GM12878 (cell line): ENCODE measurements at regions of chr9 and their contacts with region 1.

Region 1: GRCh38 chr9:72364679-72365524 is at the start of gene ZFAND5:
- DNase-seq: peak; percentile 57
- ATAC-seq: peak; percentile 88
- H3K4me3 ChIP-seq: peak within 1 kb of the TSS; percentile 91
- H3K27ac ChIP-seq: peak within 1 kb of the TSS; percentile 80
- H3K4me1 ChIP-seq: peaks cover 4% of the 10 kb centered on the region
- H3K27me3 ChIP-seq: no peaks in the 10 kb centered on the region
- CTCF ChIP-seq: peak in 1 of 3 experiments; percentile 27; a peak in 1 of 6 replicates
- EP300 ChIP-seq: peak in 1 of 2 experiments; percentile 44; a peak in 2 of 4 replicates
- POLR2A ChIP-seq: peak; percentile 97
- RAD21 ChIP-seq: peak; percentile 20; the same call in 1 of the 2 replicates
- polyA plus RNA-seq, gene ZFAND5: 22.5 to 32.3 TPM

Region 2: DNA sequence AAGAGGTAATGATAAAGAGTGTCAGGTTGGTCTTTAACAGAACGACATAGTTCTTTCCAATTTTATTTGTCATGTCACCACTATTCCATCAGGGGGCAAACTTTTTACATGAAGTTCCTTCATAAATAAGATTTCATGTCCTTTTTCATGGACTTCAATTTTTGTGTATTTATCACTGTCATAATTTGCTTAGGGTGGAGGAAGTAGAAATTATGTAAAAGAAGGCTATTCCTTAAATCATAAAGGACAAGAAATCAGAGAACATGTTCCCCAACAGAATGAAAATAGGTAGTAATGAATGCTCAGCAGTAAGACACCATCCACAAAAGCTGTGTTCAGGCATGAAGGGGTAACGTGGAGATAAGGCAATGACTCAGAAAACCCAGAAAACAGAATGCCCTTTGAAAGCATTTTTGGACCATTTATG is 72.6 kb before region 1 on chr9:
- CTCF ChIA-PET with region 1: interaction called, 17 read pairs
- POLR2A ChIA-PET with region 1: no interaction called
- RAD21 ChIA-PET with region 1: interaction called, 32 read pairs
- SMC1A ChIA-PET with region 1: interaction called, 9 read pairs
- in situ Hi-C with region 1: no loop called
- intact Hi-C with region 1: loop called (anchors 5 kb)
- DNase-seq: no peak
- ATAC-seq: peak; percentile 61
- H3K4me3 ChIP-seq: no peak overlapping the region
- H3K27ac ChIP-seq: no peak overlapping the region
- H3K4me1 ChIP-seq: no peaks in the 10 kb centered on the region
- H3K27me3 ChIP-seq: no peaks in the 10 kb centered on the region
- CTCF ChIP-seq: peak; percentile 27 to 63 (median 33); a peak in 4 of 6 replicates
- EP300 ChIP-seq: no peak
- POLR2A ChIP-seq: no peak
- RAD21 ChIP-seq: peak; percentile 65

Region 3: GRCh38 chr9:72454871-72455491 is 90.1 kb after region 1 on chr9:
- CTCF ChIA-PET with region 1: no interaction called
- POLR2A ChIA-PET with region 1: interaction called, 4 read pairs
- RAD21 ChIA-PET with region 1: interaction called, 4 read pairs
- SMC1A ChIA-PET with region 1: interaction called, 11 read pairs
- in situ Hi-C with region 1: no loop called
- intact Hi-C with region 1: no loop called
- DNase-seq: no peak
- ATAC-seq: no peak; the same call in 2 of the 3 replicates
- H3K4me3 ChIP-seq: no peak overlapping the region
- H3K27ac ChIP-seq: no peak overlapping the region
- H3K4me1 ChIP-seq: no peaks in the 10 kb centered on the region
- H3K27me3 ChIP-seq: no peaks in the 10 kb centered on the region
- CTCF ChIP-seq: no peak
- EP300 ChIP-seq: no peak
- POLR2A ChIP-seq: no peak
- RAD21 ChIP-seq: no peak

Region 4: DNA sequence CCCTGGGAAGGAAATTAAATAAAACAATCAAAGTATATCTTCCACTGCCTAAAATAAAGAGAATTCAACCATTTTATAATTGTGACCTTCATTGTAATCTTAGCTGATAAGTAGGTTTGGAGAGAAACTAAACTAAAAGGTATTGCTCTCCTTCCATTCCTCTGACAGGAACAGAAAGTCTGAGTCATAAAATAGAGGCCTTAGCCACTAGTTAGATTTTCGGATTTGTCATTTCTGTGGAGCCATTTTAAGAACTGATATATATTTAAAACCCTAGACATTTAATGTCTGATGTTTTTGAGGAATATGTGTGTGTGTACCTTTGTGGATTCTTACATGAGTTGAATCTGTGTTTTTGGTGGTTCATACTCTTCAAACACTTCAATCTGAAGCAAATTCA is 144.7 kb after region 1 on chr9:
- CTCF ChIA-PET with region 1: no interaction called
- POLR2A ChIA-PET with region 1: interaction called, 11 read pairs
- RAD21 ChIA-PET with region 1: interaction called, 10 read pairs
- SMC1A ChIA-PET with region 1: interaction called, 6 read pairs
- in situ Hi-C with region 1: no loop called
- intact Hi-C with region 1: no loop called
- DNase-seq: peak; percentile 51
- ATAC-seq: peak; percentile 96
- H3K4me3 ChIP-seq: no peak overlapping the region
- H3K27ac ChIP-seq: peak overlapping the region; percentile 88
- H3K4me1 ChIP-seq: peaks cover 14% of the 10 kb centered on the region
- H3K27me3 ChIP-seq: no peaks in the 10 kb centered on the region
- CTCF ChIP-seq: no peak
- EP300 ChIP-seq: peak in 1 of 2 experiments; percentile 45; a peak in 1 of 4 replicates
- POLR2A ChIP-seq: no peak
- RAD21 ChIP-seq: no peak

Region 5: GRCh38 chr9:72526901-72527800 is 162.2 kb after region 1 on chr9:
- CTCF ChIA-PET with region 1: interaction called, 4 read pairs
- POLR2A ChIA-PET with region 1: interaction called, 17 read pairs
- RAD21 ChIA-PET with region 1: interaction called, 16 read pairs
- SMC1A ChIA-PET with region 1: interaction called, 10 read pairs
- in situ Hi-C with region 1: no loop called
- intact Hi-C with region 1: loop called (anchors 2 kb)
- DNase-seq: peak; percentile 77
- ATAC-seq: peak; percentile 90
- H3K4me3 ChIP-seq: peak overlapping the region; percentile 51
- H3K27ac ChIP-seq: peak overlapping the region; percentile 66
- H3K4me1 ChIP-seq: peaks cover 16% of the 10 kb centered on the region
- H3K27me3 ChIP-seq: no peaks in the 10 kb centered on the region
- CTCF ChIP-seq: peak in 1 of 3 experiments; percentile 22; a peak in 1 of 6 replicates
- EP300 ChIP-seq: peak; percentile 3 to 63; a peak in 1 of 4 replicates
- POLR2A ChIP-seq: peak; percentile 76
- RAD21 ChIP-seq: no peak

Region 6: GRCh38 chr9:72586388-72587130 is 221.7 kb after region 1 on chr9:
- CTCF ChIA-PET with region 1: interaction called, 20 read pairs
- POLR2A ChIA-PET with region 1: interaction called, 4 read pairs
- RAD21 ChIA-PET with region 1: interaction called, 33 read pairs
- SMC1A ChIA-PET with region 1: interaction called, 12 read pairs
- in situ Hi-C with region 1: no loop called
- intact Hi-C with region 1: no loop called
- DNase-seq: no peak
- ATAC-seq: peak; percentile 81
- H3K4me3 ChIP-seq: no peak overlapping the region
- H3K27ac ChIP-seq: no peak overlapping the region
- H3K4me1 ChIP-seq: no peaks in the 10 kb centered on the region
- H3K27me3 ChIP-seq: no peaks in the 10 kb centered on the region
- CTCF ChIP-seq: no peak
- EP300 ChIP-seq: no peak
- POLR2A ChIP-seq: no peak
- RAD21 ChIP-seq: no peak

Region 7: GRCh38 chr9:72592502-72593403 is 227.9 kb after region 1 on chr9:
- CTCF ChIA-PET with region 1: interaction called, 20 read pairs
- POLR2A ChIA-PET with region 1: no interaction called
- RAD21 ChIA-PET with region 1: interaction called, 33 read pairs
- SMC1A ChIA-PET with region 1: interaction called, 12 read pairs
- in situ Hi-C with region 1: no loop called
- intact Hi-C with region 1: loop called (anchors 2 kb)
- DNase-seq: peak; percentile 23
- ATAC-seq: peak; percentile 94
- H3K4me3 ChIP-seq: no peak overlapping the region
- H3K27ac ChIP-seq: no peak overlapping the region
- H3K4me1 ChIP-seq: no peaks in the 10 kb centered on the region
- H3K27me3 ChIP-seq: no peaks in the 10 kb centered on the region
- CTCF ChIP-seq: peak; percentile 64 to 76 (median 69)
- EP300 ChIP-seq: no peak
- POLR2A ChIP-seq: no peak
- RAD21 ChIP-seq: peak; percentile 86